CD14-positive monocyte (primary cell): ENCODE measurements at regions of chr17 and their contacts with region 1.

Region 1: DNA sequence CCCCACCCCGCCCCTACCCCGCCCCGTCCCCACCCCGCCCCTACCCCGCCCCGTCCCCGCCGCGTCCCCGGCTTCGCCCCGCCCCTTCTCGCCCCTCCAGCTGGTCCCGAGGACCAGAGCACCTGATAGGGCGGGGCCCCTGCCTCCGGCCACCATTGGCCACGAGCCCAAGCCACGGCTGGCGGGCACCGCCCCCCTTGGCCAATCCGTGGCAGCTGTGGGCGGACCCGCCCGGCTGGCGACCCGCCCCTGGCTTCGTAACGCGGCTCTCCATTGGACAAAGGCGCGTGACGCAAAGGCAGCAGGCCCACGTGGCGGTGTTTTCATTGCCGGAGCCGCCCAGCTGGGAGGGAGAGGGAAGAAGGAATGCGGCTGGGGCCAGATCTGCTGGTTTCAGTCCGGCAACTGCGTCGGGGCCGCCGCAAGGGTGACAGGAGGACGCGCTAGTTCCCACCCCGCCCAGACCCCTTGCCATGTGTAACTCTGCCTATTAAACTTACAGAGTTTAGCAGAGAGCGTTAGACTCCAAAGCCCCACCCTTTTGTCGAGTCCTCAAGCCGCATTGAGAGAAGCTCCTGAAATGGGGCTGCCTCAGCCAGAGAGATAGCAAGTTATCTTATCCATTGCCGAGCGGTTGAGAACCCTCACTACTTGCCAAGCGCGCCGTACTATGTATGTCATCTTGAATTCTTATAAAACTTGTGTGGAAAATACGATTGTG is 403 bp upstream of the WIPI1 start:
- DNase-seq: peak; percentile 98 to 99 (median 99)
- H3K4me3 ChIP-seq: peak overlapping the region; percentile 51 to 88 (median 54)
- H3K4me3 Mint-ChIP-seq: peak overlapping the region; percentile 76 to 79
- H3K27ac ChIP-seq: peak overlapping the region; percentile 35 to 73
- H3K27ac Mint-ChIP-seq: peak overlapping the region; percentile 84 to 94 (median 90)
- H3K4me1 ChIP-seq: peaks cover 40 to 41% of the 10 kb centered on the region in 2 donors
- H3K4me1 Mint-ChIP-seq: peaks cover 52% of the 10 kb centered on the region
- H3K27me3 ChIP-seq: peaks cover 0 to 5% of the 10 kb centered on the region in 2 donors
- H3K27me3 Mint-ChIP-seq: peaks cover 0 to 8% (median 4%) of the 10 kb centered on the region in 3 donors
- CTCF ChIP-seq: no peak

Region 2: GRCh38 chr17:67959288-67959900 is 498.3 kb before region 1 on chr17:
- intact Hi-C with region 1: loop called (anchors 10 kb)
- DNase-seq: no peak
- H3K4me3 ChIP-seq: no peak overlapping the region
- H3K4me3 Mint-ChIP-seq: no peak overlapping the region
- H3K27ac ChIP-seq: peak overlapping the region in 1 of 2 donors; percentile 13
- H3K27ac Mint-ChIP-seq: peak overlapping the region in 2 of 7 donors; percentile 21 to 58
- H3K4me1 ChIP-seq: no peaks in the 10 kb centered on the region
- H3K4me1 Mint-ChIP-seq: peaks cover 5% of the 10 kb centered on the region
- H3K27me3 ChIP-seq: no peaks in the 10 kb centered on the region
- H3K27me3 Mint-ChIP-seq: no peaks in the 10 kb centered on the region
- CTCF ChIP-seq: no peak

Region 3: GRCh38 chr17:68035523-68036303 is 422.0 kb before region 1 on chr17 and contains the start of gene KPNA2:
- intact Hi-C with region 1: loop called in 1 of 2 experiments (anchors 5 kb)
- DNase-seq: peak; percentile 95 to 96 (median 96)
- H3K4me3 ChIP-seq: peak within 1 kb of the TSS; percentile 70 to 99 (median 98)
- H3K4me3 Mint-ChIP-seq: peak within 1 kb of the TSS; percentile 94 to 97
- H3K27ac ChIP-seq: peak within 1 kb of the TSS; percentile 80 to 83
- H3K27ac Mint-ChIP-seq: peak within 1 kb of the TSS; percentile 85 to 95 (median 91)
- H3K4me1 ChIP-seq: peaks cover 16 to 24% of the 10 kb centered on the region in 2 donors
- H3K4me1 Mint-ChIP-seq: peaks cover 15% of the 10 kb centered on the region
- H3K27me3 ChIP-seq: no peaks in the 10 kb centered on the region
- H3K27me3 Mint-ChIP-seq: peaks cover 1 to 2% (median 1%) of the 10 kb centered on the region in 3 donors
- CTCF ChIP-seq: no peak
- polyA plus RNA-seq, gene KPNA2: 23.2 to 36.1 (median 23.2) TPM

Region 4: DNA sequence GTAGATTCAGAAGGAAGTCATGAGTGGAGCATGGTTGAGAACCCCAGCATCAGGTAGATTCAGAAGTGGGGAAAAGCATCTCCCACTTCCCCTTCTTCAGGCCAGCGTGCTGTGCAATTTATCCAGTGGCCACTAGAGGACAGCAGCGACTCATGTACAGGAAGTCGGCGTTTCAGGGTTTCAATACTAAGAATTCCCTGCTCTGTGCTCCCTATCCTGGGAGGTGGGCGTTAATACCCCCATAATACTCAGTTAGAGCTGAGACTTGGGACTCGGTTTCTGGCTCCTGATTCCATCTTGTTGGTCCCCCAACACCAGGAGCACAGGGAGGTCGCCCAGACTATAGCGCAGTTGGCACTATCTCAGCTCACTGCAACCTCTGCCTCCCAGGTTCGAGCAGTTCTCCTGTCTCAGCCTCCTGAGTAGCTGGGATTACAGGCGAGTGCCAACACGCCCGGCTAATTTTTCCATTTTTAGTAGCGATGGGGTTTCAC is 285.2 kb before region 1 on chr17:
- intact Hi-C with region 1: loop called in 1 of 2 experiments (anchors 5 kb)
- DNase-seq: peak; percentile 53 to 73 (median 68)
- H3K4me3 ChIP-seq: no peak overlapping the region
- H3K4me3 Mint-ChIP-seq: no peak overlapping the region
- H3K27ac ChIP-seq: no peak overlapping the region
- H3K27ac Mint-ChIP-seq: no peak overlapping the region
- H3K4me1 ChIP-seq: peaks cover 0 to 4% of the 10 kb centered on the region in 2 donors
- H3K4me1 Mint-ChIP-seq: peaks cover 4% of the 10 kb centered on the region
- H3K27me3 ChIP-seq: no peaks in the 10 kb centered on the region
- H3K27me3 Mint-ChIP-seq: peaks cover 0 to 4% (median 2%) of the 10 kb centered on the region in 3 donors
- CTCF ChIP-seq: peak; percentile 99

Region 5: GRCh38 chr17:68247445-68248198 is 210.1 kb before region 1 on chr17 and contains the start of gene AMZ2:
- intact Hi-C with region 1: loop called in 1 of 2 experiments (anchors 5 kb)
- DNase-seq: peak; percentile 88 to 94 (median 94)
- H3K4me3 ChIP-seq: peak within 1 kb of the TSS; percentile 61 to 82 (median 77)
- H3K4me3 Mint-ChIP-seq: peak within 1 kb of the TSS; percentile 83 to 92
- H3K27ac ChIP-seq: peak within 1 kb of the TSS; percentile 97
- H3K27ac Mint-ChIP-seq: peak within 1 kb of the TSS; percentile 91 to 99 (median 97)
- H3K4me1 ChIP-seq: peaks cover 29 to 33% of the 10 kb centered on the region in 2 donors
- H3K4me1 Mint-ChIP-seq: peaks cover 30% of the 10 kb centered on the region
- H3K27me3 ChIP-seq: no peaks in the 10 kb centered on the region
- H3K27me3 Mint-ChIP-seq: peaks cover 2 to 10% (median 2%) of the 10 kb centered on the region in 3 donors
- CTCF ChIP-seq: no peak
- polyA plus RNA-seq, gene AMZ2: 34.0 to 67.6 (median 67.2) TPM

Region 6: DNA sequence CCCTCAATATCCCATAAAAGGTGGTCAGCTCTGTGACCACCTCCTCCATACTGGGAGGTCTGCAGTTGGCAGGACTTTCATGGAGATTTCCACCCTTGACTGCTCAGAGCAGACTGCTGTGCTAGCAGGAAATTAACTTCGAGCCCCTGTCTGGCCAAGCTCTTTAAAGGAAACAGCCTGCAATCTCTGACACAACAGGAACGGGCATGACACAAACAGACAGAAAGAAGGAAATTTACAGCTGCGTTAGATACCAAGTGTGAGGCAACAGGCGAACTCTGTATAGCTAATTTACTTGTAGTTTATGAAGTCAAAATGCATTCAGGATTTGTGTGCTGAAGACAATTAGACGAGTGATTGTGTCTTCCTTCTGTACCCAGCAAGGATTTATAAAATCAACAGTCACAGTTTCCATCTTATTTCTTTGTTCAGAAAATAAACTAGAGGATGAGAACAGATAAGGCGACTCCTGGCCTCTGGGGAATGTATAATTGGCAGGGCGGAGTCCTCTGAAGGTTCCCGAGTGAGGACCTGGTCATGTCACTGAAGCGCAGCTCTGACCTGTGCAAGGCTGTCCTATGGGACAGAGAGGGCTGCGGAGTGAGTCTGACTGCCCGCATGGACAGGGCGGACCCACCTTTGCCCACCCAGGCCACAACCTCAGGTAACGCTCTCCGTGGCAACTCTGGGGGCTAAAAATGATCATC is 16.5 kb before region 1 on chr17:
- intact Hi-C with region 1: loop called in 1 of 2 experiments (anchors 2 kb)
- DNase-seq: peak; percentile 54 to 76 (median 58)
- H3K4me3 ChIP-seq: peak overlapping the region in 1 of 3 experiments; percentile 41
- H3K4me3 Mint-ChIP-seq: peak overlapping the region; percentile 7 to 70
- H3K27ac ChIP-seq: peak overlapping the region; percentile 78 to 80
- H3K27ac Mint-ChIP-seq: peak overlapping the region; percentile 84 to 95 (median 91)
- H3K4me1 ChIP-seq: peaks cover 59 to 63% of the 10 kb centered on the region in 2 donors
- H3K4me1 Mint-ChIP-seq: peaks cover 58% of the 10 kb centered on the region
- H3K27me3 ChIP-seq: no peaks in the 10 kb centered on the region
- H3K27me3 Mint-ChIP-seq: peaks cover 0 to 1% (median 0%) of the 10 kb centered on the region in 3 donors
- CTCF ChIP-seq: no peak

Region 7: DNA sequence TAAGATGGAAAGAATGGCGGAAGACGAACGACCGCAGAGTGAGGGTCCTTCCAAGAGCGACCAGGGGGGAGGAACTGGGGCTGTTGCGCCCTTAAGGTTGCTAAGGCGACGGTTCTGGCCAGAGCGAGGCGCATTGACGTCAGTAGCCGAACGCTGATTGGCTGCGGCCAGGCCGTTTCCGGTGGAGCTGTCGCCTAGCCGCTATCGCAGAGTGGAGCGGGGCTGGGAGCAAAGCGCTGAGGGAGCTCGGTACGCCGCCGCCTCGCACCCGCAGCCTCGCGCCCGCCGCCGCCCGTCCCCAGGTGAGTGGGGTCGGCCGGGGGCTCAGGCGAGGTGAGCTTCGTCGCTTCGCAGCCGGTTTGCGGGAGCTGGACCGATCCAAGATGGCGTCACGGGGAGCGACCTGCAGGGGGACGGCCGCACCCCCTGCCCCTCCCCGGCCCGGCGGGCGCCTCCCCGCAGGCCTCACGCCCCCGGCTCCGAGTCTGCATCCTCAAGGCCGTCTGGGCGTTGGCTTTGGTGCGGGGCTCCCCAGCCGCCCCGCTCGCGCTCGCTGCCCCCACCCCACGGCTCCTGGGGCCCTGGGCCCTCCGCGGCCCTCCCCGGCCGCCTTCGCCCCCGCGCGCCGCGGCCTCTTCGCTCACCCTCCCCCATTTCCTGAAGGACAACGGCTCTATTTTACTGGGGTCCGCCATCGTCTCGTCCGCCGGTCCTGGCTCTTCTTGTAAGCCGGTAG is 54.7 kb after region 1 on chr17 and contains the start of gene PRKAR1A:
- intact Hi-C with region 1: loop called in 1 of 2 experiments (anchors 5 kb)
- DNase-seq: peak; percentile 88 to 96 (median 90)
- H3K4me3 ChIP-seq: peak within 1 kb of the TSS; percentile 80 to 97 (median 90)
- H3K4me3 Mint-ChIP-seq: peak within 1 kb of the TSS; percentile 98 to 99
- H3K27ac ChIP-seq: peak within 1 kb of the TSS; percentile 81 to 98
- H3K27ac Mint-ChIP-seq: peak within 1 kb of the TSS; percentile 98 to 100 (median 100)
- H3K4me1 ChIP-seq: peaks cover 57 to 67% of the 10 kb centered on the region in 2 donors
- H3K4me1 Mint-ChIP-seq: peaks cover 61% of the 10 kb centered on the region
- H3K27me3 ChIP-seq: no peaks in the 10 kb centered on the region
- H3K27me3 Mint-ChIP-seq: peaks cover 0 to 5% (median 0%) of the 10 kb centered on the region in 3 donors
- CTCF ChIP-seq: no peak
- polyA plus RNA-seq, gene PRKAR1A: 91.9 to 436 (median 300) TPM